ENCODE measurements at regions of chr9 and their contacts with region 1.

Region 1: GRCh38 chr9:105713260-105714019 is 19.1 kb downstream of the TMEM38B start:
- DNase-seq: no peak
- H3K4me3 Mint-ChIP-seq: no peak overlapping the region
- H3K27ac Mint-ChIP-seq: no peak overlapping the region
- H3K4me1 Mint-ChIP-seq: peaks cover 4% of the 10 kb centered on the region
- H3K27me3 Mint-ChIP-seq: no peaks in the 10 kb centered on the region

Region 2: GRCh38 chr9:105346273-105346672 is 367.2 kb before region 1 on chr9:
- intact Hi-C with region 1: no loop called
- DNase-seq: no peak
- H3K4me3 Mint-ChIP-seq: no peak overlapping the region
- H3K27ac Mint-ChIP-seq: no peak overlapping the region
- H3K4me1 Mint-ChIP-seq: peaks cover 12% of the 10 kb centered on the region
- H3K27me3 Mint-ChIP-seq: peaks cover 3% of the 10 kb centered on the region

Region 3: DNA sequence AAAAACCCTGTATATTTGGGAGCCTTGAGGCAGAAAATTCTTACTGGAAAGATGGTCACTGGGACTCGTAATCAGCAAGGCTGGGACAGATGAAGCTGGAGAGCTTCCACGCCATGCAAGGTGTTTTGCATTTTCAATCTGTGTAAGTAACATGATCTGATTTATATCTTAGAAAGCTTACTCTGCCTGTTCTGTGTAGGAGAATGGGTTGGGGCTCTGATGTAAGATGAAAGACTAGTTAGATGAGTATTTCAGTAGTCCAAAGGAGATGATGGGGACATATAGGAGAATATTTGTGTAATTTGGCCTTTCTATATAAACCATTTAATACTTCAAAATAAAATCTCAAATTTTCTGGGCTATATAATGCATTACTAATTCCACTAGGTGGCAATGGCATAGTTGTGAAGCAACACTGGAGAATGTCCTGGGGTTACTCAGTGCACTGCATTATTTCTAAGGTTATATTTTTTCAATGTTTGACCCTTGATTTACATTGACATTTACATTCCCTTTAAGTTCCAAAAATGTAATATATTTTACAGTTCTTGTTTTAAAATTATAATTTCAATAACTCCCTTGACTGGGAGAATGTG is 287.5 kb before region 1 on chr9:
- intact Hi-C with region 1: loop called (anchors 5 kb)
- DNase-seq: no peak
- H3K4me3 Mint-ChIP-seq: no peak overlapping the region
- H3K27ac Mint-ChIP-seq: no peak overlapping the region
- H3K4me1 Mint-ChIP-seq: no peaks in the 10 kb centered on the region
- H3K27me3 Mint-ChIP-seq: peaks cover 10% of the 10 kb centered on the region

Region 4: GRCh38 chr9:105608721-105609598 is 104.5 kb before region 1 on chr9:
- intact Hi-C with region 1: loop called (anchors 1 kb)
- DNase-seq: peak; percentile 58
- H3K4me3 Mint-ChIP-seq: no peak overlapping the region
- H3K27ac Mint-ChIP-seq: no peak overlapping the region
- H3K4me1 Mint-ChIP-seq: no peaks in the 10 kb centered on the region
- H3K27me3 Mint-ChIP-seq: no peaks in the 10 kb centered on the region